ENCODE measurements at regions of chr6 and their contacts with region 1.

Region 1: GRCh38 chr6:41449399-41450245 is 96.6 kb upstream of the FOXP4 start:
- DNase-seq: peak; percentile 62
- ATAC-seq: peak; percentile 24

Region 2: DNA sequence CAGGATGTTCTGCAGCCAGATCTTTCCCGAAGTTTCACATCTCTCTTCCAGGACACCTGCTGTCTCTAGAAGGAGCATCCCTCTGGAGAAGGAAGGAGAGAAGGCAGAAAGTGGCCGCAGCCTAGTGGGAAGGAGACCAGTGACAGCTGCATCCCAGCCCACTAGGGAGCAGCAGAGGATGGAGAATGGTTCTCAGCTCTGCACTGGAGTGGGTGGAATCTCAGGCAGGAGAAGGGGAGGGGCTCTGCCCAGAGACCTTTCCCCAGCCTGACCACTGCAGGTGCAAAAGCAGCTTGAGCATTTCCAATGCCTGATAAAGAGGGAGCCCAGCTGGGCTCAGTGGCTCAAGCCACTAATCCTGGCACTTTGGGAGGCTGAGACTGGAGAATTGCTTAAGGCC is 81.9 kb before region 1 on chr6:
- intact Hi-C with region 1: loop called (anchors 10 kb)
- DNase-seq: no peak
- ATAC-seq: peak; percentile 77

Measured in Right ventricle myocardium superior (tissue), 1 donor.